CD4-positive, alpha-beta memory T cell (primary cell): ENCODE measurements at regions of chr10 and their contacts with region 1.

Region 1: DNA sequence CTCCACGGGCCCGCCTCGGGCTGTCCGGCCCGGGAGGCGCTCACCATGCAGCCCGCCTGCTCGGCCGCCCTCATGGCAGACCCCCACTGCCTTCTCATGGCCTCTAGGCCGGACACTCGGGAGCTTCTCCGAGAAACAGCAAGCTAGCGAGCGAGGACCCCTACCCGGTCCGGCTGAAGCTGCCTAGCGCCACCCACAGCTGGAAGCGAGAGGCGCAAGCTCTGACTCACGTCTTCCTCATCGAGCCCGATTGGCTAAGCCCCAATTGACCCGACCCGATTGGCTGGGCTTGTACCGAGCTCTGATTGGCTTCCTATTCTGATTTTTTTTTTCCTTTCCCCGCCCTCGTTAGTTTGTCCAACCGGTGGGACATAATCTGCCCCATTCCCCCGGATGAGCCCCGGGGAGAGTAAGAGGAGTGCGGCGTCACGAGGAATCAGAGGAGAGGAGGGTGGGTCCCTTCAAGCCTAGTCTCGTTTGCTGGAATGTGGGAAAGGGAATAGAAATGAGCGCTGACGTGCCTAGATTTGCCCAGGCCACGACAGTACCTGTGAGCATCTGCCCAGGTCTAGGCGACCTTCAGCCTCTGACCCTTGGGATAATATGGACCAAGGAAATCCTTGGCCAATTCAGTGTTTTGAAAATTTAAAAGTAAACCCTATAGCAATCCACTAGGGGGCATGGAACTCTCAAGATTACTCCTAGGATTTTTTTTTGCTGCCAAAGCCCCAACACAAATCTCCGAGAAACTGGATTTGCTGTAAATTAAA is at the start of gene TYSND1:
- DNase-seq: peak; percentile 90 to 96 (median 91)
- H3K4me3 ChIP-seq: peak within 1 kb of the TSS; percentile 50 to 87
- H3K4me3 Mint-ChIP-seq: peak within 1 kb of the TSS; percentile 90 to 93 (median 91)
- H3K27ac ChIP-seq: peak within 1 kb of the TSS; percentile 78
- H3K27ac Mint-ChIP-seq: peak within 1 kb of the TSS; percentile 92 to 99 (median 98)
- H3K4me1 ChIP-seq: peaks cover 33% of the 10 kb centered on the region
- H3K4me1 Mint-ChIP-seq: peaks cover 13 to 41% (median 32%) of the 10 kb centered on the region in 4 donors
- H3K27me3 ChIP-seq: no peaks in the 10 kb centered on the region
- H3K27me3 Mint-ChIP-seq: no peaks in the 10 kb centered on the region
- total RNA-seq, gene TYSND1: 29.3 to 31.4 TPM

Region 2: DNA sequence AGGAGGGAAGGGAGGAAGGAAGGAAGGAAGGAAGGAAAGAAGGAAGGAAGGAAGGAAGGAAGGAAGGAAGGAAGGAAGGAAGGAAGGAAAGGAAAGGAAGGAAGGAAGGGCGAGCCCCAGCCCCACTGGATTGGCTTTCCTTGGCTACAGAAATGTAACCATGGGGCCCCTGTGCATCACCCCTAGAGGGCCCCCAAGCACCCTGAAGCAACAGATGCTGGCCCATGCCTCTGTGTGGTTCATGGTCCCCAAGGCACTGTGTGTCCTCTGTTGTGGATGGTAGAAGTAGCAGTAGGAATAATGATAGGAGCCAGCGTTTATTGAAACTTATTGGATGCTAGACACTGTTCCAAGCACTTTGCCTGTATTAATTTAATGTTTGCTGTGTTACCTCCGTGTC is 210.6 kb before region 1 on chr10:
- CTCF ChIA-PET with region 1: no interaction called
- POLR2A ChIA-PET with region 1: no interaction called
- intact Hi-C with region 1: no loop called
- DNase-seq: no peak
- H3K4me3 ChIP-seq: no peak overlapping the region
- H3K4me3 Mint-ChIP-seq: no peak overlapping the region
- H3K27ac ChIP-seq: no peak overlapping the region
- H3K27ac Mint-ChIP-seq: no peak overlapping the region
- H3K4me1 ChIP-seq: no peaks in the 10 kb centered on the region
- H3K4me1 Mint-ChIP-seq: no peaks in the 10 kb centered on the region
- H3K27me3 ChIP-seq: no peaks in the 10 kb centered on the region
- H3K27me3 Mint-ChIP-seq: peaks cover 1 to 13% of the 10 kb centered on the region in 2 donors

Region 3: DNA sequence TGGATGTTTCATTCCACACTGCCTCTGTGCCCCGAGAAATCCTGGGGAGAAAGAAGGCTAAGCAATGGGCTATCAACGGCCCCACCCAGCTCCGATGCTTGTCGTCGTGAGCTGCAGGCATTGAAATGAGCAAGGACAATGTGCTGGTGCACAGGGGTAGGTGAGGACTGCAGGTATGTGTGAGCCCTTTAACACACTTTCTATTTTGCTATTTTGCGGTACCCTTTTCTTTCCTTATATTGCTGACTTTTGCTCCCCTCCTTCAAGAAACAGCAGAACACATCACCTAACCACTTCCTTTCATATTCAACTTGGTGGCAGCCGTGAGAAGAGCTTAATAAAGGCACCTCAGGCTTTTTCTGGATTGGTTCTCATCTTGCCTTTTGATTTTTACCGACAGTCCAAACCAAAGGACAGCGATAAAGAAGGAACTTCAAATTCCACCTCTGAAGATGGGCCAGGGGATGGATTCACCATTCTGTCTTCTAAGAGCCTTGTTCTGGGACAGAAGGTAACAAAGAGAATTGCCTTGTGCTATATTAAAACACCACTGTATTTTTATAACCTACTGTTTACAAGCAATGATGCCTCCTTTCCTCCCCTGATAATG is 53.2 kb before region 1 on chr10:
- CTCF ChIA-PET with region 1: interaction called, 56 read pairs
- POLR2A ChIA-PET with region 1: interaction called, 81 read pairs
- intact Hi-C with region 1: loop called (anchors 1 kb)
- DNase-seq: peak; percentile 37 to 51 (median 44)
- H3K4me3 ChIP-seq: peak overlapping the region; percentile 26 to 62
- H3K4me3 Mint-ChIP-seq: peak overlapping the region; percentile 76 to 87 (median 84)
- H3K27ac ChIP-seq: peak overlapping the region; percentile 61
- H3K27ac Mint-ChIP-seq: peak overlapping the region; percentile 83 to 98 (median 94)
- H3K4me1 ChIP-seq: peaks cover 45% of the 10 kb centered on the region
- H3K4me1 Mint-ChIP-seq: peaks cover 25 to 46% (median 37%) of the 10 kb centered on the region in 4 donors
- H3K27me3 ChIP-seq: no peaks in the 10 kb centered on the region
- H3K27me3 Mint-ChIP-seq: no peaks in the 10 kb centered on the region

Region 4: DNA sequence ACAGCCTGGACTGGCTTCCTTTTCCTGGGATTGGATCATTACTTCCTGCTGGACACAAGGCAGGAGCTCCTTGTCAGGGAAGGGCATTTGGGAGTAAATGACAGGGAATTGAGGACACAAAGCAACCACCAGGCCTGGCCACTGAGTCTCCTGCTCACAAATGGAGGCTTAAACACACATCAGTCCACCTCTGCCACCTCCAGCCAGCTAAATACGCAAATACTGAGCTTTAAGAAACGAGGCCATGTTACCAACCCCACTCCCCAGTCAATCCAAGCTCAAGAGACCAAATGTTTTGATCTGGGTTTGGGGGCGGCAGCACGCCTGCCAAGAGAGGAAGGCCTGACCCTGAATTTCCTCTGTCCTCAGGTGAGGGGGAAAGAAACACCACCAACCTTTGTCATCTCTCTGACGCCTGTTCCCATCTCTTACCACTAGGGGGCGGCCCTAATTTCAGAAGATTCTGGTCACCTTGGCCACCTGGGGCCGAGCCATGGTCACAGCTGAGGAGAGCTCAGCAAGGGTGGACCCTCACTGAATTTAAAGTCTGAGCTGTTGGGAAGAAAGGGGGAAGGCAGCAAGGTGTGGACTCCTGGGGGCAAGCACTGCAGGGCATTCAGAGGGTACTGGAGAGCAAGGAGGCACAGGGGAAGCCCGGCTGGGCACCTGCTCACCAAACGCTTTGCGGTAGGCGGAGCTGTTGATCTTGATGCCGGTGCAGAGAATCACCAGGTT is 30.6 kb before region 1 on chr10:
- CTCF ChIA-PET with region 1: interaction called, 153 read pairs
- POLR2A ChIA-PET with region 1: interaction called, 16 read pairs
- intact Hi-C with region 1: loop called (anchors 1 kb)
- DNase-seq: peak; percentile 49 to 57 (median 55)
- H3K4me3 ChIP-seq: no peak overlapping the region
- H3K4me3 Mint-ChIP-seq: peak overlapping the region in 1 of 8 donors; percentile 49
- H3K27ac ChIP-seq: no peak overlapping the region
- H3K27ac Mint-ChIP-seq: peak overlapping the region in 1 of 7 donors; percentile 74
- H3K4me1 ChIP-seq: peaks cover 5% of the 10 kb centered on the region
- H3K4me1 Mint-ChIP-seq: peaks cover 0 to 7% (median 4%) of the 10 kb centered on the region in 4 donors
- H3K27me3 ChIP-seq: no peaks in the 10 kb centered on the region
- H3K27me3 Mint-ChIP-seq: no peaks in the 10 kb centered on the region

Region 5: GRCh38 chr10:70162892-70163201 is 16.2 kb after region 1 on chr10:
- CTCF ChIA-PET with region 1: interaction called, 106 read pairs
- POLR2A ChIA-PET with region 1: interaction called, 119 read pairs
- intact Hi-C with region 1: no loop called
- DNase-seq: peak; percentile 62 to 84 (median 71)
- H3K4me3 ChIP-seq: no peak overlapping the region
- H3K4me3 Mint-ChIP-seq: peak overlapping the region; percentile 26 to 83 (median 74)
- H3K27ac ChIP-seq: peak overlapping the region; percentile 29
- H3K27ac Mint-ChIP-seq: peak overlapping the region; percentile 19 to 78 (median 74)
- H3K4me1 ChIP-seq: peaks cover 69% of the 10 kb centered on the region
- H3K4me1 Mint-ChIP-seq: peaks cover 47 to 76% (median 62%) of the 10 kb centered on the region in 4 donors
- H3K27me3 ChIP-seq: no peaks in the 10 kb centered on the region
- H3K27me3 Mint-ChIP-seq: no peaks in the 10 kb centered on the region

Region 6: GRCh38 chr10:70197235-70197945 is 50.7 kb after region 1 on chr10:
- CTCF ChIA-PET with region 1: interaction called, 28 read pairs
- POLR2A ChIA-PET with region 1: interaction called, 4 read pairs
- intact Hi-C with region 1: loop called (anchors 1 kb)
- DNase-seq: peak in 1 of 5 donors; percentile 2
- H3K4me3 ChIP-seq: no peak overlapping the region
- H3K4me3 Mint-ChIP-seq: peak overlapping the region in 3 of 8 donors; percentile 13 to 49 (median 46)
- H3K27ac ChIP-seq: no peak overlapping the region
- H3K27ac Mint-ChIP-seq: peak overlapping the region in 2 of 7 donors; percentile 12 to 48
- H3K4me1 ChIP-seq: peaks cover 10% of the 10 kb centered on the region
- H3K4me1 Mint-ChIP-seq: peaks cover 4 to 12% (median 10%) of the 10 kb centered on the region in 4 donors
- H3K27me3 ChIP-seq: no peaks in the 10 kb centered on the region
- H3K27me3 Mint-ChIP-seq: no peaks in the 10 kb centered on the region

Region 7: DNA sequence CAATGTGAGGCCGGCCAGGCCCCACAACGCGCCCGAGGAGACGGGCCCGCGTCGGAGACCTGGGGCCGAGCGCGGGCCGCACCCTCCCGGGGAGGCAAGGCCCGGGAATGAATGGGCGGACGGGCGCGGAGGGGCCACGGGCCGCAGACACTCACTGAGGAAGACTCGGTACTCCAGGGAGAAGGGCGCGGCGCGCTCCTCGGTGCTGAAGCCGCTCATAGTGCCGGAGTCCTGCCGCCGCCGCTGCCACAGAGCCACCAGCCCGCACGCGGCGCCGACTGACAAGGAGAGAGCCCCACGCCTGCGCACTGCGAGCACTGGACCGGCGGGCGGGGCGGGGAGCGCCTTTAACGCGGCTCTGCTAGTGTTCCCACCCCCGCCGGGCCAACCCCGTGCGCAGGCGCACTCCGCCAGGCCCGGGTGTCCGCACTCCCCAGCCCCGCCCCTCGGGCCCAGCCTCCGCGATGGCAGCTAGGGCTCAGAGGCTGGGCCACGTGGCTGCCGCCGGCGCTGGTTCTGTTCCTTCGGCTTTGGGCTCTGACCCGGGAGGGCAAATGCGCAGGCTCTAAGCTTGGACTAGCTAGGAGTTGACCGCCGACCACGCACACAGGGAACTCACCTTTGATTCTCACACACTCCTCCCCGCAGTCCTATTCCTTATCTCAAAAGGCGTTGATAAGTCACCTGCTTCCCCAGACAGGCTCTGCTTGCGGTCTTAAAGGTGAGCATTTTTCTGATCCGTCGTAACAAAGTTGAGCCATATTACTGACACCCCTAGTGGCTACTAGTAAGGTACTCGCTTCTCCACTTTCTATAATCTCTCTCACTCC is 86.7 kb after region 1 on chr10 and contains the start of gene PPA1:
- CTCF ChIA-PET with region 1: interaction called, 15 read pairs
- POLR2A ChIA-PET with region 1: interaction called, 19 read pairs
- intact Hi-C with region 1: loop called (anchors 1 kb)
- DNase-seq: peak; percentile 98 to 100 (median 99)
- H3K4me3 ChIP-seq: peak within 1 kb of the TSS; percentile 67 to 77
- H3K4me3 Mint-ChIP-seq: peak within 1 kb of the TSS; percentile 89 to 94 (median 91)
- H3K27ac ChIP-seq: peak within 1 kb of the TSS; percentile 82
- H3K27ac Mint-ChIP-seq: peak within 1 kb of the TSS; percentile 88 to 97 (median 96)
- H3K4me1 ChIP-seq: peaks cover 20% of the 10 kb centered on the region
- H3K4me1 Mint-ChIP-seq: peaks cover 14 to 42% (median 29%) of the 10 kb centered on the region in 4 donors
- H3K27me3 ChIP-seq: no peaks in the 10 kb centered on the region
- H3K27me3 Mint-ChIP-seq: peaks cover 0 to 1% of the 10 kb centered on the region in 2 donors
- total RNA-seq, gene PPA1: 57.4 to 60.4 TPM